Mammary epithelial cell (primary cell): ENCODE measurements at regions of chr18 and their contacts with region 1.

Region 1: DNA sequence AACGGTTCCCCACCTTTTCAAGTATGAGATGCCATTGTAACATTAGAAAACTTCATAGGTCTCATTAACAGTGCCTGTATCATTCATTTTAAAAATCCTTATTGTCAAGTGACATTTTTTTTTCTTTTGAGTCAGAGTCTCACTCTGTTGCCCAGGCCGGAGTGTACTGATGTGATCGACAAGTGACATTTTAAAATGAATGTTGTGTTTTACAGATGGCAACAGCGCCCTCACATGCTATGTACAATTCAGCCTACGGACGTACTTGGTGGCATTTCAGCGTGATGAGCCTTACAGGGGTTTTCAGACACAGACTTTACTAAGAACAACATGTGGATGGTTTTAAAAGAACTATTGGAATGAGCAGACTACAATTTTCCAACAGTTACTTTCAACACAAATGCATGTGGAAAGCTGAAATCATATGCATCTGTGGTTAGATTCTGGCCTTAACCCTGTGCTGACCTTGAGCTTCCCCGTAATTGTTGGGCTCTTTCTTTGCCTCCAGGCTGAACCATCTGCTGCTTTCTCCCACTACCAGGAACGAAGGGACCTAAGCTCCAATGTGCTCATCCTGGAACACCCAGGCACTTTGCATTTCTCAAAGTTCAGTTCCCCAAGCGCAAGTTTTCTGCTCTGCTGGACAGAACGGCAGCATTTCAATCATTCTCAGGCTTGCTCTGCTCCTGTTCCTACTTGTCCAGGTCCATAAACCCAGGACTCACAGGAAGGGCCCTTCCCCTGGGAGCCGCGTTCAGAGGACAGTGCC is 119.9 kb upstream of the NDUFV2 start:
- DNase-seq: peak; percentile 54
- H3K4me3 ChIP-seq: no peak overlapping the region
- H3K27ac ChIP-seq: peak overlapping the region; percentile 72
- H3K4me1 ChIP-seq: peaks cover 40% of the 10 kb centered on the region
- H3K27me3 ChIP-seq: no peaks in the 10 kb centered on the region
- CTCF ChIP-seq: peak; percentile 35 to 64

Region 2: GRCh38 chr18:8654503-8655451 is 327.8 kb before region 1 on chr18:
- CTCF ChIA-PET with region 1: interaction called, 10 read pairs
- dilution Hi-C with region 1: no loop called
- in situ Hi-C with region 1: loop called (anchors 10 kb)
- intact Hi-C with region 1: loop called (anchors 1 kb)
- DNase-seq: no peak
- H3K4me3 ChIP-seq: no peak overlapping the region
- H3K27ac ChIP-seq: no peak overlapping the region
- H3K4me1 ChIP-seq: peaks cover 11% of the 10 kb centered on the region
- H3K27me3 ChIP-seq: no peaks in the 10 kb centered on the region
- CTCF ChIP-seq: peak; percentile 69 to 71

Region 3: GRCh38 chr18:8704361-8705279 is 278.0 kb before region 1 on chr18:
- CTCF ChIA-PET with region 1: interaction called, 9 read pairs
- dilution Hi-C with region 1: loop called (anchors 25 kb)
- in situ Hi-C with region 1: loop called in 1 of 2 experiments (anchors 10 kb)
- intact Hi-C with region 1: loop called (anchors 1 kb)
- DNase-seq: peak; percentile 85
- H3K4me3 ChIP-seq: peak overlapping the region; percentile 47 to 80 (median 65)
- H3K27ac ChIP-seq: peak overlapping the region; percentile 47
- H3K4me1 ChIP-seq: peaks cover 15% of the 10 kb centered on the region
- H3K27me3 ChIP-seq: no peaks in the 10 kb centered on the region
- CTCF ChIP-seq: no peak

Region 4: GRCh38 chr18:8721716-8722115 is 260.9 kb before region 1 on chr18:
- CTCF ChIA-PET with region 1: no interaction called
- dilution Hi-C with region 1: no loop called
- in situ Hi-C with region 1: no loop called
- intact Hi-C with region 1: no loop called
- DNase-seq: peak; percentile 48
- H3K4me3 ChIP-seq: no peak overlapping the region
- H3K27ac ChIP-seq: peak overlapping the region; percentile 1
- H3K4me1 ChIP-seq: peaks cover 18% of the 10 kb centered on the region
- H3K27me3 ChIP-seq: no peaks in the 10 kb centered on the region
- CTCF ChIP-seq: no peak

Region 5: GRCh38 chr18:8922669-8923068 is 59.9 kb before region 1 on chr18:
- CTCF ChIA-PET with region 1: no interaction called
- dilution Hi-C with region 1: no loop called
- in situ Hi-C with region 1: no loop called
- intact Hi-C with region 1: loop called (anchors 2 kb)
- DNase-seq: no peak
- H3K4me3 ChIP-seq: no peak overlapping the region
- H3K27ac ChIP-seq: no peak overlapping the region
- H3K4me1 ChIP-seq: no peaks in the 10 kb centered on the region
- H3K27me3 ChIP-seq: no peaks in the 10 kb centered on the region
- CTCF ChIP-seq: no peak

Region 6: DNA sequence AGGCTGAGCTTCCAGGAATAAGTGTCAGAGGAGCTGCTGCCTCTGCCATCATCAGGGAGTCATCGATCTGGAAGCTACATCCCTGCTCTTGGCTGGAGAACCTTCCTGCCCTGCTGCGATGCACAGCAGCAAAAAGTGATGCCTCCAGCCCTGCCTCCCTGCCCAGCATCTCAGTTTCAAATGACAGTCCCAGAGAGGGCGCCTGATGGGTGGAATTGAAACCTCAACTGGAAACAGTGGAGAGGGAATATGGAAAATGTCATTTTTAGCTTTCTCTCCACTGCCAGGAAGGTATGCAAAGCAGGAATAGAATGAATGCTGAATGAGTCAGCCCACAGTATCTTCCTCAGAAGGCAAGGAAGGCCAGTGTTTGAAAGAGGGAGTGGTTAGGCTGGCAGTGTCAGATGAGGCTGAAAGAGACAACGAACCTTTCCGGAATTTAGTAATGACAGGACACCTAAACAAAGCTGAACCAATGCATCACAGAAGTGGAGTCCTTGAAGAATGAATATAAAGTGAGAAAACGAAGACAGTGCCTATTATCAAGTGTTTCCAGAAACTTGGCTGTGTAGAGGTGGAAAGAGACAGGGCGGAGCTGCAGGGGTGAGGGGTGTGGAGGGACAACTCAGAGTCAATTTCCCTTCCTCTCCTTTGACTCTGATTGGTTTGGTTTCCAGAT is 34.0 kb before region 1 on chr18:
- CTCF ChIA-PET with region 1: interaction called, 4 read pairs
- dilution Hi-C with region 1: no loop called
- in situ Hi-C with region 1: no loop called
- intact Hi-C with region 1: loop called (anchors 2 kb)
- DNase-seq: peak; percentile 88
- H3K4me3 ChIP-seq: peak overlapping the region; percentile 5 to 30 (median 25)
- H3K27ac ChIP-seq: peak overlapping the region; percentile 65
- H3K4me1 ChIP-seq: peaks cover 58% of the 10 kb centered on the region
- H3K27me3 ChIP-seq: no peaks in the 10 kb centered on the region
- CTCF ChIP-seq: no peak

Region 7: GRCh38 chr18:9066817-9067306 is 84.3 kb after region 1 on chr18:
- CTCF ChIA-PET with region 1: no interaction called
- dilution Hi-C with region 1: loop called (anchors 5 kb)
- in situ Hi-C with region 1: no loop called
- intact Hi-C with region 1: no loop called
- DNase-seq: peak; percentile 15
- H3K4me3 ChIP-seq: no peak overlapping the region
- H3K27ac ChIP-seq: no peak overlapping the region
- H3K4me1 ChIP-seq: peaks cover 12% of the 10 kb centered on the region
- H3K27me3 ChIP-seq: no peaks in the 10 kb centered on the region
- CTCF ChIP-seq: no peak